Activated naive CD4-positive, alpha-beta T cell treated with anti-CD3 and anti-CD28 coated beads for 36 hours (primary cell): ENCODE measurements at regions of chr5 and their contacts with region 1.

Region 1: DNA sequence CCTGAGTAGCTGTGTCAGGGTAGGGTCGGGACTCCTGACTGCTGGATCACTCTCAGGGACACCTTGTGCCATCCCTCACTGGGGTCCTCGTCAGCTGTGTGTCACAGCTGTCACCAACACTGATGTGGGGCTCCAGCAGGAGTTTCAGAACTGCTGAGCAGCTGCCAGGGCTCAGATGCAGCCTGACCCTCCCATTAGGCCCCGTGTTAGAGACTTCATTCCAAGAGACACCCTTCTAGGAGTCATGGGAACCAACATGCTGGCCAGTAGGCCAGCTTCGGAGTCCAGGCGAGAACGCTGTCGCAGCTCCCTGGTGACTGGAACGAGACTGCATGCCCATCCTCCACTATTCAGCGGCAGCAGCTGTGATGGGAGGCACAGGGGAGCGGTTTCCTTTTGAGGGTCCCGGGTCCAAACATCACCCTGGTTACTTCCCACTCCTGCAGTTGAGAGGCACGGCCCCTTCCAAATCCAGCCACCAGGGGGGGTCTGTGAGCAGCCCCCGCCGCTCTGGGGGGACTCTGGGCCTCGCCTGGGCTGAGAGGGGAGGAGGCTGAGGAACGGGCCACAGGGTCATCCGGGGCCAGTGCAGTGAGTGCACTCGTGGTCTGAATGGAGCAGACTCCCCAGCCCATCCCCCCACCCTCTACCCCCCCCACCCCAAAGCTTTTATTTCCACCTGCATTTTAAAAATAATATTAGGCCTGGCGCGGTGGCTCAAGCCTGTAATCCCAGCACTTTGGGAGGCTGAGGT is 12.6 kb upstream of the TCF7 start:
- DNase-seq: peak; percentile 78
- H3K4me3 Mint-ChIP-seq: peak overlapping the region; percentile 12
- H3K27ac Mint-ChIP-seq: peak overlapping the region; percentile 24
- H3K4me1 Mint-ChIP-seq: peaks cover 95% of the 10 kb centered on the region
- H3K27me3 Mint-ChIP-seq: no peaks in the 10 kb centered on the region

Region 2: DNA sequence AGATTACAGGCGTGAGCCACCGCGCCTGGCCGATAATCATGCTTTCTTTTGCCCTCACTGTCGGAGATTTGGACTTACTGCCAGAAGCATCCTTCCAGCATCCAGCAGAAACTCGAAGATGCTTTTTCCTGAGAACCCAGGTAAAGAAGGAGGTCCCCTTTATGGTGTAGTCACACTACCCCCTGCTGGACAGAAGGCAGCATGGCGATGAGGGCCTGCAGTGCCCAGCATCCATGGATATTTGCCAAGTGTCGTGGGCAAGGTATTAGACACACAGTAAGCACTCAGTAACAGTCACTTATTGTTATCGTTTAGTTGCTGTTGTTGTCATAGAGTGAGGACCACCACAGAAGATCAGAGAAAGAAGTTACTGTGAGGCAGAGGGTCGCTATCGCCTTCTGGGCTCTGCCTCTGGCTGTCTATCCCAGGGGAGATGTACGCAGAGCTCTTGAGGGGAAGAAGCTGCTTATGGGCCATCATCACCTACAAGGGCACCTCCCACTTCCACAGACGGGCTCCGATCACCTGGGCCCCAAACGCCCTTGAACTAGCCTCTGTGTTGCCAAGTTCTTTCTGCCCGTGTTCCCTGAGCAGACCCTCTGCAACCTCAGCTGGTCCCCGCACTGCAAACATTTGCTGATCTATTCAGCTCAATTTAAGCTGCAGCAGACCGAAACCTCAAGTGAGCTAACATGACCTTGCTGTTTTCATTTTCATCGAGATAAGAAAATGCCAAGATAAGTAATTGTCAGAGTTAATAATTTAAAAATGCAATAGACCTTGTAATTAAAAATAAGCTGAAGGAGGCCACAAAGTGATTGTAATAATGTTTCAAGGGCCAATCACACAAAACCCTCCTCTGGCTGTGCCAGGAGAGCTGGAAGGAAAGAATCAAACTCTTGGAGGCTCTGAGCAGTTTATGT is 157.3 kb before region 1 on chr5:
- CTCF ChIA-PET with region 1: no interaction called
- intact Hi-C with region 1: no loop called
- DNase-seq: peak; percentile 75
- H3K4me3 Mint-ChIP-seq: no peak overlapping the region
- H3K27ac Mint-ChIP-seq: no peak overlapping the region
- H3K4me1 Mint-ChIP-seq: peaks cover 9% of the 10 kb centered on the region
- H3K27me3 Mint-ChIP-seq: no peaks in the 10 kb centered on the region

Region 3: DNA sequence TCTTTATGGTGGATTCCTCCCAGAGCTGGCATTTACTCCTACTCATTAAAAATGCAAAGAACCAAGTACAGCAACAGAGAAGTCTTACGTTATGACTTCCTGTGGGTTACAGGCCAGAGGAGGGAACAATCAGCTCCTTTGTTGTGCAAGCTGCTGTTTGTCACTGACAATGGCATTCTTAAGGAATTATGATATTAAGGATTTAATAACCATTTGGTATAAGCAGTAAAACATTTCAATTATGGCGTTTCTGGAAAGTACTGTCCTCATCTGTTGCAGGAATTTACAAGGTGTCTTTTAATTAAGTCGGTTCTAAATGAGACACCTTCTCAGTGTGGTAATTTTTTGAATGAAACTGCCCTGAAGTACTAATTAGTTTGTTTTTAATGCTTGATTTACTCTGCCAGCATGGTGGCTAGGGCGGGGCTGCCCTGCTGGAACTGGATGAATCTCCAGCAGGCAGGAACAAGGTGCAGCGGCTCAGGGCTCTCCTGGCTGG is 48.0 kb before region 1 on chr5:
- CTCF ChIA-PET with region 1: interaction called, 31 read pairs
- intact Hi-C with region 1: loop called (anchors 1 kb)
- DNase-seq: no peak
- H3K4me3 Mint-ChIP-seq: no peak overlapping the region
- H3K27ac Mint-ChIP-seq: peak overlapping the region; percentile 65
- H3K4me1 Mint-ChIP-seq: peaks cover 52% of the 10 kb centered on the region
- H3K27me3 Mint-ChIP-seq: no peaks in the 10 kb centered on the region

Region 4: GRCh38 chr5:134077926-134078580 is 23.8 kb before region 1 on chr5:
- CTCF ChIA-PET with region 1: interaction called, 19 read pairs
- intact Hi-C with region 1: loop called (anchors 1 kb)
- DNase-seq: peak; percentile 76
- H3K4me3 Mint-ChIP-seq: no peak overlapping the region
- H3K27ac Mint-ChIP-seq: peak overlapping the region; percentile 96
- H3K4me1 Mint-ChIP-seq: peaks cover 74% of the 10 kb centered on the region
- H3K27me3 Mint-ChIP-seq: no peaks in the 10 kb centered on the region

Region 5: GRCh38 chr5:134113902-134114875 is 12.3 kb after region 1 on chr5 and contains the start of gene TCF7:
- CTCF ChIA-PET with region 1: interaction called, 26 read pairs
- intact Hi-C with region 1: loop called (anchors 1 kb)
- DNase-seq: peak; percentile 81
- H3K4me3 Mint-ChIP-seq: peak within 1 kb of the TSS; percentile 81
- H3K27ac Mint-ChIP-seq: peak within 1 kb of the TSS; percentile 91
- H3K4me1 Mint-ChIP-seq: peaks cover 64% of the 10 kb centered on the region
- H3K27me3 Mint-ChIP-seq: no peaks in the 10 kb centered on the region
- total RNA-seq, gene TCF7: 87.9 to 92.3 TPM

Region 6: GRCh38 chr5:134132372-134133034 is 30.6 kb after region 1 on chr5:
- CTCF ChIA-PET with region 1: no interaction called
- intact Hi-C with region 1: loop called (anchors 1 kb)
- DNase-seq: peak; percentile 93
- H3K4me3 Mint-ChIP-seq: peak overlapping the region; percentile 36
- H3K27ac Mint-ChIP-seq: peak overlapping the region; percentile 90
- H3K4me1 Mint-ChIP-seq: peaks cover 99% of the 10 kb centered on the region
- H3K27me3 Mint-ChIP-seq: no peaks in the 10 kb centered on the region

Region 7: GRCh38 chr5:134176511-134177368 is 74.9 kb after region 1 on chr5 and contains the start of gene SKP1:
- CTCF ChIA-PET with region 1: interaction called, 3 read pairs
- intact Hi-C with region 1: loop called (anchors 2 kb)
- DNase-seq: peak; percentile 83
- H3K4me3 Mint-ChIP-seq: peak within 1 kb of the TSS; percentile 96
- H3K27ac Mint-ChIP-seq: peak within 1 kb of the TSS; percentile 94
- H3K4me1 Mint-ChIP-seq: peaks cover 31% of the 10 kb centered on the region
- H3K27me3 Mint-ChIP-seq: no peaks in the 10 kb centered on the region
- total RNA-seq, gene SKP1: 307 to 309 TPM